ENCODE measurements at regions of chr13 and their contacts with region 1.

Region 1: GRCh38 chr13:50911937-50912795 is 2.6 kb downstream of the RNASEH2B start:
- DNase-seq: peak; percentile 72 to 86 (median 82)
- ATAC-seq: peak; percentile 73
- H3K4me3 ChIP-seq: peak overlapping the region; percentile 86
- H3K4me3 Mint-ChIP-seq: peak overlapping the region; percentile 72 to 99 (median 93)
- H3K27ac ChIP-seq: peak overlapping the region; percentile 86
- H3K27ac Mint-ChIP-seq: peak overlapping the region; percentile 72 to 98 (median 92)
- H3K4me1 ChIP-seq: peaks cover 15 to 28% of the 10 kb centered on the region in 2 donors
- H3K4me1 Mint-ChIP-seq: peaks cover 34 to 70% (median 62%) of the 10 kb centered on the region in 7 donors
- H3K27me3 ChIP-seq: no peaks in the 10 kb centered on the region
- H3K27me3 Mint-ChIP-seq: no peaks in the 10 kb centered on the region

Region 2: GRCh38 chr13:49443704-49444523 is 1468.3 kb before region 1 on chr13 and contains the starts of genes CAB39L and SETDB2:
- CTCF ChIA-PET with region 1: no interaction called
- POLR2A ChIA-PET with region 1: no interaction called
- intact Hi-C with region 1: loop called in 1 of 2 experiments (anchors 1 kb)
- DNase-seq: peak; percentile 91 to 100 (median 99)
- ATAC-seq: peak; percentile 95
- H3K4me3 ChIP-seq: peak within 1 kb of the TSS; percentile 92
- H3K4me3 Mint-ChIP-seq: peak within 1 kb of the TSS; percentile 91 to 97 (median 95)
- H3K27ac ChIP-seq: peak within 1 kb of the TSS; percentile 83
- H3K27ac Mint-ChIP-seq: peak within 1 kb of the TSS; percentile 95 to 99 (median 97)
- H3K4me1 ChIP-seq: peaks cover 22 to 35% of the 10 kb centered on the region in 2 donors
- H3K4me1 Mint-ChIP-seq: peaks cover 30 to 58% (median 53%) of the 10 kb centered on the region in 7 donors
- H3K27me3 ChIP-seq: no peaks in the 10 kb centered on the region
- H3K27me3 Mint-ChIP-seq: no peaks in the 10 kb centered on the region
- total RNA-seq, gene CAB39L: 2.9 to 5.9 (median 4.6) TPM
- total RNA-seq, gene SETDB2: 16.7 to 30.0 (median 20.3) TPM

Region 3: GRCh38 chr13:49976314-49977258 is 935.6 kb before region 1 on chr13:
- CTCF ChIA-PET with region 1: interaction called, 33 read pairs
- POLR2A ChIA-PET with region 1: interaction called, 13 read pairs
- intact Hi-C with region 1: loop called (anchors 1 kb)
- DNase-seq: peak; percentile 54 to 77 (median 66)
- ATAC-seq: peak; percentile 94
- H3K4me3 ChIP-seq: no peak overlapping the region
- H3K4me3 Mint-ChIP-seq: no peak overlapping the region
- H3K27ac ChIP-seq: no peak overlapping the region
- H3K27ac Mint-ChIP-seq: peak overlapping the region in 1 of 9 donors; percentile 38
- H3K4me1 ChIP-seq: no peaks in the 10 kb centered on the region
- H3K4me1 Mint-ChIP-seq: peaks cover 0 to 10% (median 0%) of the 10 kb centered on the region in 7 donors
- H3K27me3 ChIP-seq: no peaks in the 10 kb centered on the region
- H3K27me3 Mint-ChIP-seq: no peaks in the 10 kb centered on the region

Region 4: GRCh38 chr13:50319635-50320255 is 592.4 kb before region 1 on chr13:
- CTCF ChIA-PET with region 1: interaction called, 3 read pairs
- POLR2A ChIA-PET with region 1: no interaction called
- intact Hi-C with region 1: loop called in 1 of 2 experiments (anchors 10 kb)
- DNase-seq: peak in 1 of 9 donors; percentile 7
- ATAC-seq: peak; percentile 55
- H3K4me3 ChIP-seq: no peak overlapping the region
- H3K4me3 Mint-ChIP-seq: peak overlapping the region in 3 of 10 donors; percentile 1 to 12 (median 10)
- H3K27ac ChIP-seq: no peak overlapping the region
- H3K27ac Mint-ChIP-seq: peak overlapping the region in 8 of 9 donors; percentile 21 to 77 (median 46)
- H3K4me1 ChIP-seq: peaks cover 0 to 28% of the 10 kb centered on the region in 2 donors
- H3K4me1 Mint-ChIP-seq: peaks cover 0 to 20% (median 12%) of the 10 kb centered on the region in 7 donors
- H3K27me3 ChIP-seq: no peaks in the 10 kb centered on the region
- H3K27me3 Mint-ChIP-seq: peaks cover 0 to 10% (median 0%) of the 10 kb centered on the region in 5 donors

Region 5: DNA sequence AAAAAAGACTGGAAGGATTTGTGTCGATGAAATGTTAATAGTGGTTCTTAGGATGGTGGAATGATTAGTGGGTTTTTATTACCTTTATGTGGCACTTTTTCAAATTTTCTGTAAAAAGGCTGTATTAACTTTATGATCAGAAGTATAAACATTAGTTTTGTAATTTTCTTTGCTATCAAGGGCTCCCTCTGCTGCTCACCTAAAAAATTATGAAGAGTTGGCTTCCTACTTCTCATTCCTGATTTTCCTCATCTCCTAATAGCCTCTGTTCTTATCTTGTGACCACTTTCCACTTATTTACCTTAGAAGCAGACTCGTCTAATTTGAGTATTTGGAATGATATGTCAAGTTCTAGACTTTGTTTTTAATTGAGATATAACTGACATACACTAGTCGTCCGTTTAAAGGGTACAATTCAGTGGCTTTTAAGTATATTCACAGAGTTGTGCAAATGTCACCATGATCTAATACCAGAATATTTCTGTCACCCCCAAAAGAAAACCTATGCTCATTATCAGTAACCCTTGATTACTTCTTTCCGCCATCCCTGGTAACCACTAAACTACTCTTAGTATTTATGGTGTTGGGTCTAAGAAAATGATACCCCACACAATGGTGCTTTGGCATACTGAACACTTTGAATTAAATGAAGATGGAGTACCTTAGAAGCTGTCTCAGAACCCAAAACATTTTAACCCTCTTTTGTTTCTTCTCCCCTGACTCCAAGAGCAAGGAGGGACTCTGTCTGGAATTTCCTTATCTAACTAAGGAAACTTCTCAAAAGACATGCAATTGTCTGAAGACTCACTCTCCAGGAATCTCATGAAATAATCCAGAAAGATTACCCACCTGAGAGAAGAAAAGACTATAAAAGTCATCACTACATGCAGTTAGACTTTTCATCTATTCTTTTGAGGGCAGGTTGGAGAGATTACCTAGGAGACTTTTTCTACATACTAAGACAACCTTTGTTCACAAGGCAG is 380.0 kb before region 1 on chr13:
- CTCF ChIA-PET with region 1: no interaction called
- POLR2A ChIA-PET with region 1: no interaction called
- intact Hi-C with region 1: loop called (anchors 1 to 5 kb)
- DNase-seq: no peak
- ATAC-seq: no peak
- H3K4me3 ChIP-seq: no peak overlapping the region
- H3K4me3 Mint-ChIP-seq: no peak overlapping the region
- H3K27ac ChIP-seq: no peak overlapping the region
- H3K27ac Mint-ChIP-seq: no peak overlapping the region
- H3K4me1 ChIP-seq: no peaks in the 10 kb centered on the region
- H3K4me1 Mint-ChIP-seq: peaks cover 9 to 28% (median 13%) of the 10 kb centered on the region in 7 donors
- H3K27me3 ChIP-seq: no peaks in the 10 kb centered on the region
- H3K27me3 Mint-ChIP-seq: peaks cover 0 to 17% (median 11%) of the 10 kb centered on the region in 5 donors

Region 6: DNA sequence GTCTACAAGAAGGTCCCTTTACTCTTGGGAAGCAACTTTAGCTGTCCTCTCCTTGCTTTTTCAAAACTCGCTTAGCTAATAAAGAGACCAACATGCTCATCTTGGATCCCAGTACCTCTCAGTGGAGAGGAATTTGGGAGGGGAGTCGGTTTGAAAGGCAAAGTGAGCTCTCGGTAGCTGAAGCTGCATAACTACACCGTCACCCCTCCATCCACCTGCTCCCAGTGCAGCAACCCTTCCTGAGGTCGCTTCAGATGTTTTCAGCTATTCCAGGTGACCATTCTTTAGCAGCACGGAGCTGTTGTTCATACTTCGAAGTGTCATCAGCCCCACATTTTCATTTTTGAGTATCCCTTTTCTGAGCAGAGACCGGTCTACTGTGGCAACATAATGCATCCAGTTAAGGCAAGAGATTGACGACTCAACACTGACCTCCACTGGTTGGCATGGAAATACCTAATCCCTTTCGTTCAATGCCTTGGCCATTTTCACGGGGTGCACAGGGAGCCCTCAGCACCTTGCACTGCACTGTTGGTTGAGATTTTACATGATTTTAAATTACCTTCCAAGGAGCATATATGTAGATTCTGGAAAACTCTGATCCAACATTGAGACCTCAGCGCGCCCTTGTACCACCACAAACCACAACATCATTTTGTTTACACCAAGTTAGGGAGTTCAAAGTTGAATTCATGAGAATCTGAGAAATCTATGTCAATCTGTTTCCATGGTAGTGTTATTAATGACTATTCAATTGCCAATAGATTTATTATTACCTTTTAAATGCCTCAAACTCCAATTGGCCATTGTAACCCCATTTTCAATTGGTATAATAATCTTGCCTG is 110.9 kb before region 1 on chr13:
- CTCF ChIA-PET with region 1: interaction called, 15 read pairs
- POLR2A ChIA-PET with region 1: interaction called, 6 read pairs
- intact Hi-C with region 1: loop called (anchors 1 kb)
- DNase-seq: peak; percentile 13 to 71 (median 56)
- ATAC-seq: peak; percentile 96
- H3K4me3 ChIP-seq: no peak overlapping the region
- H3K4me3 Mint-ChIP-seq: peak overlapping the region in 1 of 10 donors; percentile 39
- H3K27ac ChIP-seq: no peak overlapping the region
- H3K27ac Mint-ChIP-seq: peak overlapping the region in 1 of 9 donors; percentile 20
- H3K4me1 ChIP-seq: peaks cover 0 to 3% of the 10 kb centered on the region in 2 donors
- H3K4me1 Mint-ChIP-seq: peaks cover 0 to 26% (median 6%) of the 10 kb centered on the region in 7 donors
- H3K27me3 ChIP-seq: no peaks in the 10 kb centered on the region
- H3K27me3 Mint-ChIP-seq: peaks cover 0 to 8% (median 0%) of the 10 kb centered on the region in 5 donors

Region 7: GRCh38 chr13:51070005-51070649 is 158.0 kb after region 1 on chr13:
- CTCF ChIA-PET with region 1: no interaction called
- POLR2A ChIA-PET with region 1: no interaction called
- intact Hi-C with region 1: loop called in 1 of 2 experiments (anchors 1 kb)
- DNase-seq: peak; percentile 43 to 75 (median 66)
- ATAC-seq: peak; percentile 83
- H3K4me3 ChIP-seq: no peak overlapping the region
- H3K4me3 Mint-ChIP-seq: peak overlapping the region in 2 of 10 donors; percentile 7 to 27
- H3K27ac ChIP-seq: no peak overlapping the region
- H3K27ac Mint-ChIP-seq: peak overlapping the region in 1 of 9 donors; percentile 76
- H3K4me1 ChIP-seq: no peaks in the 10 kb centered on the region
- H3K4me1 Mint-ChIP-seq: peaks cover 0 to 37% (median 7%) of the 10 kb centered on the region in 7 donors
- H3K27me3 ChIP-seq: no peaks in the 10 kb centered on the region
- H3K27me3 Mint-ChIP-seq: peaks cover 10 to 25% (median 16%) of the 10 kb centered on the region in 5 donors